CD8-positive, alpha-beta T cell (primary cell): ENCODE measurements at regions of chr2 and their contacts with region 1.

Region 1: DNA sequence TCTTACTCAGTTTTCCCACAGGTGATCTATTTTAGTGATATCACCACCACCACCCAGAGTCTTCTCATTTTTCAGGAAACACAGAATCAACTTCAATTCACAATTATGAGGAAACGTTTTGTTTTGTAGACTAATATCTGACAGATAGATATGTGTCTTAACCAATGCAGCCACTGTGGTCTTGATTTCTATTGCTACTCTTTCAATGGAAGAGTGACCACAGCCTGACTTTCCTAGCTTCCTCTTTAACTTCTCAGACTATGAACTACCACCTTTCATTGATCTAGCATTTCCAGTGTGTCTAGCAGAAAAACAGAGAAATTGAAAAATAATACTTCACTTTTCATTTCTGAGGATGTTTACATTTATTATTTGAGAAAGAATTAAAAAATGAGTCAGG is 20.5 kb downstream of the ADAM17 start:
- DNase-seq: no peak
- ATAC-seq: no peak
- H3K4me3 ChIP-seq: no peak overlapping the region
- H3K4me3 Mint-ChIP-seq: no peak overlapping the region
- H3K27ac ChIP-seq: no peak overlapping the region
- H3K27ac Mint-ChIP-seq: no peak overlapping the region
- H3K4me1 ChIP-seq: no peaks in the 10 kb centered on the region
- H3K4me1 Mint-ChIP-seq: peaks cover 20% of the 10 kb centered on the region
- H3K27me3 ChIP-seq: no peaks in the 10 kb centered on the region
- H3K27me3 Mint-ChIP-seq: no peaks in the 10 kb centered on the region
- CTCF ChIP-seq: no peak

Region 2: DNA sequence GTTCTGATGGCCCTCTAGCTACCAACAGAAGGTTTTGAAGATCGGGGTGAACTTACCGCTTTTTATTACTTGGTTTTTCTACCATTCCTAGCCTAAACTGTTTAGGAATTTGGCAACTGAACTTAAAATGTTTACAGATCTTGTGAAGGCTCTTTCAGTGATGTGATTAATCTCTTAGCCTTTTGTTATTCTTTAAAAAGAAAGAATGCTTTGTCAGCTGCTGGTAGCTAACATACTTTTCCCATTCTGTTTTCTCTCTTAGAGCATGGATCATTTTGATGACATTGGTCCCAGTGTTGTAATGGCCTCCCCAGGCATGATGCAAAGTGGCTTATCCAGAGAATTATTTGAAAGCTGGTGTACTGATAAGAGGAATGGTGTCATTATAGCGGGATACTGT is 93.6 kb before region 1 on chr2:
- CTCF ChIA-PET with region 1: no interaction called
- POLR2A ChIA-PET with region 1: no interaction called
- intact Hi-C with region 1: no loop called
- DNase-seq: no peak
- ATAC-seq: no peak
- H3K4me3 ChIP-seq: no peak overlapping the region
- H3K4me3 Mint-ChIP-seq: no peak overlapping the region
- H3K27ac ChIP-seq: no peak overlapping the region
- H3K27ac Mint-ChIP-seq: no peak overlapping the region
- H3K4me1 ChIP-seq: no peaks in the 10 kb centered on the region
- H3K4me1 Mint-ChIP-seq: no peaks in the 10 kb centered on the region
- H3K27me3 ChIP-seq: no peaks in the 10 kb centered on the region
- H3K27me3 Mint-ChIP-seq: no peaks in the 10 kb centered on the region
- CTCF ChIP-seq: no peak

Region 3: GRCh38 chr2:9547262-9547991 is 12.2 kb after region 1 on chr2:
- CTCF ChIA-PET with region 1: no interaction called
- POLR2A ChIA-PET with region 1: no interaction called
- intact Hi-C with region 1: loop called in 1 of 2 experiments (anchors 2 kb)
- DNase-seq: no peak
- ATAC-seq: no peak
- H3K4me3 ChIP-seq: no peak overlapping the region
- H3K4me3 Mint-ChIP-seq: peak overlapping the region; percentile 1
- H3K27ac ChIP-seq: no peak overlapping the region
- H3K27ac Mint-ChIP-seq: no peak overlapping the region
- H3K4me1 ChIP-seq: peaks cover 31% of the 10 kb centered on the region
- H3K4me1 Mint-ChIP-seq: peaks cover 64% of the 10 kb centered on the region
- H3K27me3 ChIP-seq: no peaks in the 10 kb centered on the region
- H3K27me3 Mint-ChIP-seq: no peaks in the 10 kb centered on the region
- CTCF ChIP-seq: no peak